ENCODE measurements at regions of chr1 and their contacts with region 1.

Region 1: DNA sequence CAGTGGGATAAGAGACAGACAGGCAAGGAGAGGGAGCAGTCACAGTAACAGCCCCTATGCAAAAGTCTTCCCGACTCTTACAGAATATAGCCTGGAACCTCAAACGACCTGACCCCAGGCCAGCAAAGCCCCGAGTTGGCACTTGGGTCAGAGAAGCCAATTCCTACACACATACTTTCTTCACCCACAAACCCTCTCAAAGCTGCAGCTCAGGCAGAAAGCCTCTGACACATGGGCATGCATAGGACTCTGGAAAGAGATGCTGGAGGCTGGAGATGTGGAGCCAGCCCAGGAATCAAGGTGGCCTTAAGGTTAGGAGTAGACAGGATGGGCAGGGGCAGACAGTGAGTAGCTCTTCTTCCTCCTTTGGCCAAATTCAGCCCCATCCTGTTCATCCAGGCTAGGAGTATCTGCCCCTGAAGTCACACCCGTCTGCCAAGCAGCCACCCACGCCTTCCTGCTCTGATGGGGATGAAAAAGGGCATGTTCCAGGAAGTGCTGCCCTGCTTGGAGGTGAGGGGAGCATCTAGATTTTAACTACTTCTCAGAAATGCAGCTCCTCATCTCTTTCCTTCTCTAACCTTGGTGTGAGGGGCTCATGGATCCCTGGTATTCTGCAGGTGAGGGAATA is 7.8 kb downstream of the SLC41A1 start:
- DNase-seq: no peak
- H3K4me3 ChIP-seq: no peak overlapping the region
- H3K27me3 ChIP-seq: no peaks in the 10 kb centered on the region
- CTCF ChIP-seq: no peak

Region 2: DNA sequence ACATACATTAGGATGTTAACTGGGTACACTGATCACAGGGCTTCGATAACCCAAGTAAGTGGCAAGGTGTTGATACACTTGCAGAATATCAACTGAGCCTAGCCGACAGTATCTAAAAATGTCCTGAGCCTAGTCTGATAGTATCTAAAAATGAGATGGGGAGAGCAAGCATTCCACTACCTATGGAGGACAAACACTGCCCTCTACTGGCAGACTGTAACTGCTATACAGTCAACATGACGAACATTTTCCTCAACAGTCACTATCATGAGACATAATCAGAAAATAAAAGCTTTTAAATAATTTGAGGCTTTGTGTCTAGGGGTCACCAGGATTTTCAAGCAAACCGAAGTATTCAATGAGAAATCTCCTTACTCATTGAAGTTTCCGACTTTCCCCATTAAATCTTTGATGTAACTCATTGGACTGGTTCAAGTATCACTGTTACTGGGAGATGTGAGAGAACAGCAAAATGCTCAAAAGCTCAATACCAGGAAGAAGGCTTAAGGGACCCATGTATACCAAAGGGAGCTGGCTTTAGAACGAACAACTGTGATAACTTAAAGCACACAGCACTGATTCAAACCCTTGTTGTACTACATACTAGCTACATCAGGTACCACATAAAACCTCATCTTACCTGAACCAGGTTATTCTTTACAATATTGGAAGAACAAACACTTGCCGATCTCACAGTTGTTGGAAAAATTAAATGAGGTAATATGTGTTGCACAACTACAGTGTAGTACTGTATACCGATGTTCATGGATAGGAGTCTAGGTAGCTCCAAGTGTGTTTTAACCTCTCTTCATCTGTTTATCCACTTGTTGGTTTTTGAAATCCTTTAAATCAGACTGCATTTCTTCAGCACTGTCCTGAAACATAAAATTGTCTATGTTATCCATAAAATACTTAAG is 93.8 kb before region 1 on chr1:
- CTCF ChIA-PET with region 1: no interaction called
- POLR2A ChIA-PET with region 1: no interaction called
- DNase-seq: peak; percentile 20
- H3K4me3 ChIP-seq: no peak overlapping the region
- H3K27me3 ChIP-seq: no peaks in the 10 kb centered on the region
- CTCF ChIP-seq: peak; percentile 87

Region 3: GRCh38 chr1:205766038-205766437 is 39.2 kb before region 1 on chr1:
- CTCF ChIA-PET with region 1: no interaction called
- POLR2A ChIA-PET with region 1: interaction called, 12 read pairs
- DNase-seq: no peak
- H3K4me3 ChIP-seq: no peak overlapping the region
- H3K27me3 ChIP-seq: no peaks in the 10 kb centered on the region
- CTCF ChIP-seq: no peak

Region 4: DNA sequence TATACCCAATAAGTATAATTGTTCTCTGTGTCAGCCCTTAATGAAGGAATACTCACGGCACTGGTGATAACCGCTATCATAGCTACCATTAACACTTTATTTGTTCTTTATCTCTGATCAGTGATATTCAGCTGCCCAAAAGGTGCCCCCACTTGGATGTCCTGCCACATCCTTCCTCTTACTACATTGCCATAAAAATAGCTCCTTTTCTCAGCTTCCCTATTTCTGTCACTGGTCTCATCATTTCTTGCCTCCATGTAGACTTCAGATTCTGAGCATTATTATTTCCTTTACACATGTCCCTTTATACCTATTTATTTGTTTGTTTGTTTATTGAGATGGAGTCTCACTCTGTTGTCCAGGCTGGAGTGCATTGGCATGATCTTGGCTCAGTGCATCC is 27.2 kb before region 1 on chr1:
- CTCF ChIA-PET with region 1: no interaction called
- POLR2A ChIA-PET with region 1: no interaction called
- DNase-seq: no peak
- H3K4me3 ChIP-seq: no peak overlapping the region
- H3K27me3 ChIP-seq: no peaks in the 10 kb centered on the region
- CTCF ChIP-seq: no peak

Measured in BJ (cell line).